Body of pancreas (tissue), 4 donors: ENCODE measurements at regions of chr10 and their contacts with region 1.

Region 1: DNA sequence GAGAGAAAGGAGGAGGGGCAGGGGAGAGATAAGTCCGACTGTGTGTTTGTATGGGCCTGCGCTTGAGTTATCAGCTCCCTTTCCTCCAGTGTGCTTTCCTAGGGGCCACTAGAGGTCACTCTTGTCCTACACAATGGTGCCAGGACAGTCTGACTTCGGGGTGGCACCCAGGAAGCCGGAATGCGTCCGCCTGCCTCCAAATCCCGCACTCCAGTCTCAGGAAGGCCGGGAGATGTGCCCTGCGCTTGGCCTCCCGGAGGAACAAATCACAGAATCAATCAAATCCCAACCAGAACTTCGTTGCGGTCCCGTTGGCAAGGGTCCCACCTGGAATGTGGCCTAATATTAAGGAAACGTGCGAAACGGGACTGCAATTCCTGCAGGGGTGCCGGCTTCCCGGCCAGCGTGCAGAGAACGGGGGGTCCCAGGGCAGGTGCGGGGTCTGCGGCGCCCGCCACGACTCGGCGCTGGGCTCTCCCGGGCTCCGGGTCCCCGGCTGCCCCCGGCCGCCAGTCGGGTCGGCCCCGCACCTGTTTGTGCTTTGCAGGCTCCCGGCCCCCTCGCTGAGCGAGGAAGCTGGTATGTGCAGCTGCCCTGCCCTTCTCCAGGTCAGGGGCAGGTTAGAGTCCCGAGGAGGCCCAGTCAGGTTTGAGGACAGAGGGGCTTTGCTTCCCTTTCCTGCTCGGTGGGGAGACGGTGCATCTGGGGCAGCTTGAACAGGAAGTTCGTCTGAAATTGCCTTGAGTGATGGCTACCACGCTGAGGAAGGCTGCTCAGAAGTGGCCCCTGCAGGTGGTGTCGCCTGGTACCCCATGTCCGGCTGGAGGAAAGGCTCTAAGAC is 21.0 kb upstream of the HPS1 start:
- DNase-seq: peak; percentile 80 to 88 (median 85)
- ATAC-seq: peak; percentile 99
- H3K4me3 ChIP-seq: peak overlapping the region; percentile 23 to 36
- H3K27ac ChIP-seq: peak overlapping the region in 1 of 4 donors; percentile 42
- H3K4me1 ChIP-seq: peaks cover 9% of the 10 kb centered on the region
- H3K27me3 ChIP-seq: no peaks in the 10 kb centered on the region
- CTCF ChIP-seq: peak; percentile 74 to 98 (median 94)
- POLR2A ChIP-seq: peak in 2 of 3 donors; percentile 40 to 54

Region 2: DNA sequence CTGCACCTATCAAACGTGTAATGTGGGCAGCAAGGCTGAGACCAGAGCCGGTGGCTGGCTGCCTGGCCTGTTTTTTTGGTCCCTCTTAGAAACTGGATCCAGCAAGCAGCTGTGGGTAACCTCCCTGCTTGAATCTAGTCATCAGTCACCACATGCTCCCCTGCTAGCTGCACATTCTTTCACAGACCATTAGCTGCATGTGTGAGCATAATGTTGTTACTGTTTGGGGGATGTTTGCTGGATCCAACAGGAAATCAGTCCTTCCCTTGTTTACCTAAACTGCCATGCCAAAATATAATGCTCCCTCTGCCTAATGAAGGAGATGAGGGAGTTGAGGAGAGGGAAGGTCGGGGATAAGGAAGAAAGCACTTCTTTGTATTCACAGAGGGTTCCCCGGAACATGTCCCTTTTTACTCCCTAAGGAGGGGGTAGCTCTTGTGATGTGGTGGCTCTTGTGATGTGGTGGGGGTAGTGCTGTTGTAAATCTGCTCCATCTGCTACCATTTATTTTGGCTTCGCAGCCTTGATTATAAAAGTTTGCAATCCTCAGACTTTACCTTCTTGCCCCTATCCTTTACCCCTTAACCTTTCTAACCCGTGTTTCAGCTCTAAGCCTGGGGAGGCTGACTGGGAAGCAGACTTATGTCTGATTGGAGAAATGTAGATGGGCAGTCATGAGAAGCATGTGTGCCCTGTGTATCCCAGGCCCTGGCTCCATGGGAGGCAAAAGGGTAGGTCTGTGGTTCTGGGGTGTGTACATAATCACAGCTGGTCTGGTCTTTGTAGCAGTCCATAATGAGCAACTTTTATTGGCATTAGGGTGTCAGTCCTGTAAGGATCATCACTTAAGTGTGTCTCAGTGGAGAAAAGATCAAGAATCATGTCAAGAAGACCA is 220.6 kb before region 1 on chr10:
- intact Hi-C with region 1: no loop called
- DNase-seq: no peak
- ATAC-seq: peak; percentile 69
- H3K4me3 ChIP-seq: no peak overlapping the region
- H3K27ac ChIP-seq: peak overlapping the region; percentile 15 to 24 (median 19)
- H3K4me1 ChIP-seq: no peaks in the 10 kb centered on the region
- H3K27me3 ChIP-seq: no peaks in the 10 kb centered on the region
- CTCF ChIP-seq: no peak
- POLR2A ChIP-seq: no peak

Region 3: GRCh38 chr10:99172130-99172738 is 704.5 kb after region 1 on chr10:
- intact Hi-C with region 1: loop called (anchors 5 kb)
- DNase-seq: peak; percentile 44 to 64 (median 54)
- ATAC-seq: no peak
- H3K4me3 ChIP-seq: no peak overlapping the region
- H3K27ac ChIP-seq: no peak overlapping the region
- H3K4me1 ChIP-seq: no peaks in the 10 kb centered on the region
- H3K27me3 ChIP-seq: no peaks in the 10 kb centered on the region
- CTCF ChIP-seq: peak; percentile 31 to 64 (median 47)
- POLR2A ChIP-seq: no peak

Region 4: DNA sequence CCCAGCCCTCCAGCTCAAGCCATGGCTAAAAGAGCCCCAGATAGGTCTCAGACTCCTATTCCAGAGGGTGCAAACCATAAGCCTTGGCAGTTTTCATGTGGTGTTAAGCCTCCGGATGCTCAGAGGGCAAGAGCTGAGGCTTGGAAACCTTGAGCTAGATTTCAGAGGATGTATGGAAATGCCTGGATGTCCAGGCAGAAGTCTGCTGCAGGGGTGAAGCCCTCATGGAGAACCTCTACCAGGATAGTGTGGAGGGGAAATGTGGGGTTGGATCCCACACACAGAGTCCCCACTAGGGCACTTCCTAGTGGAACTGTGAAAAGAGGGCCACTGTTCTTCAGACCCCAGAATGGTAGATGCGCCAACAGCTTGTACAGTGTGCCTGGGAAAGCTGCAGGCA is 781.1 kb after region 1 on chr10:
- intact Hi-C with region 1: loop called (anchors 5 kb)
- DNase-seq: no peak
- ATAC-seq: no peak
- H3K4me3 ChIP-seq: no peak overlapping the region
- H3K27ac ChIP-seq: no peak overlapping the region
- H3K4me1 ChIP-seq: no peaks in the 10 kb centered on the region
- H3K27me3 ChIP-seq: no peaks in the 10 kb centered on the region
- CTCF ChIP-seq: no peak
- POLR2A ChIP-seq: no peak